Right cardiac atrium (tissue), 5 donors: ENCODE measurements at regions of chr11 and their contacts with region 1.

Region 1: GRCh38 chr11:17371614-17372013 is 16.8 kb downstream of the KCNJ11 start:
- DNase-seq: no peak
- ATAC-seq: no peak
- H3K4me3 ChIP-seq: no peak overlapping the region
- H3K27ac ChIP-seq: no peak overlapping the region
- H3K4me1 ChIP-seq: no peaks in the 10 kb centered on the region
- H3K27me3 ChIP-seq: no peaks in the 10 kb centered on the region

Region 2: DNA sequence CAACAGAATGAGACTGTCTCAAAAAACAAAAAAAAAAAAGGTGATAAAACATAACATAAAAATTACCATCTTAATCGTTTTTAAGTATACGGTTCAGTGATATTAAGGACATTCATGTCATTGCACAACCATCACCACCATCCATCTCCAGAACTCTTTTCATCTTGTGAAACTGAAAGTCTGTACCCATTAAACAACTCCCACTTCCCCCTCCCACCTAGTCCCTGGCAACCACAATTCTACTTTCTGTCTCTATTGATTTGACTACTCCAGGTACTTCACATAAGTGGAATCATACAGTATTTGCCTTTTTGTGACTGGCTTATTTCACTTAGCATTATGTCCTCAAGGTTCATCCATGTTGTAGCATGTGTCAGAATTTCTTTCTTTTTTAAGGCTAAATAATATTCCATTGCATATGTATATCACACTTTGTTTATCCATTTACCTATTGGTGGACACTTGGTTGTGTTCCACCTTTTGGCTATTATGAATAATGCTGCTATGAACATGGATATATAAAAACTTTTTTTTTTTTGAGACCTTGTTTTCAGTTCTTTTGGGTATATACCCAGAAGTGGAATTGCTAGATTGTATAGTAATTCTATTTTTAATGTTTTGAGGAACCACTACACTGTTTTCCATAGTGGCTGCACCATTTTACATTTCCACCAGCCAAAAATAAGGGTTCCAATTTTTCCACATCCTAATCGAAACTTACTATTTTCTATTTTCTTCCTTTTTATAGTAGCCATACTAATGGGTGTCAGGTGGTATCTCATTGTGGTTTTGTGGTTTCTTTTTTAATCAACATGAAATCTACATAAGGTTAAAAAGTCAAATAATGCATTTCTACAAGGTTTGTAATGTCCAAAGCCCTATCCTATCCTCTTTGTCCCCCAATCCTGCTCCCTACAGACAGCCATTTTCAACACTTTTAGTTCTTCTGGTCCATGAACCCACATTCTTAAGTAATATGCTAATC is 140.5 kb before region 1 on chr11:
- intact Hi-C with region 1: loop called in 1 of 4 experiments (anchors 10 kb)
- DNase-seq: no peak
- ATAC-seq: no peak
- H3K4me3 ChIP-seq: no peak overlapping the region
- H3K27ac ChIP-seq: no peak overlapping the region
- H3K4me1 ChIP-seq: no peaks in the 10 kb centered on the region
- H3K27me3 ChIP-seq: no peaks in the 10 kb centered on the region